WTC11 (cell line): ENCODE measurements at regions of chr9 and their contacts with region 1.

Region 1: GRCh38 chr9:35675732-35676392 is 2.1 kb downstream of the CA9 start:
- DNase-seq: peak; percentile 95
- ATAC-seq: peak; percentile 92
- H3K4me3 Mint-ChIP-seq: peak overlapping the region; percentile 69
- H3K27ac Mint-ChIP-seq: no peak overlapping the region
- H3K4me1 Mint-ChIP-seq: peaks cover 15% of the 10 kb centered on the region
- H3K27me3 Mint-ChIP-seq: peaks cover 30% of the 10 kb centered on the region
- CTCF ChIP-seq: no peak

Region 2: DNA sequence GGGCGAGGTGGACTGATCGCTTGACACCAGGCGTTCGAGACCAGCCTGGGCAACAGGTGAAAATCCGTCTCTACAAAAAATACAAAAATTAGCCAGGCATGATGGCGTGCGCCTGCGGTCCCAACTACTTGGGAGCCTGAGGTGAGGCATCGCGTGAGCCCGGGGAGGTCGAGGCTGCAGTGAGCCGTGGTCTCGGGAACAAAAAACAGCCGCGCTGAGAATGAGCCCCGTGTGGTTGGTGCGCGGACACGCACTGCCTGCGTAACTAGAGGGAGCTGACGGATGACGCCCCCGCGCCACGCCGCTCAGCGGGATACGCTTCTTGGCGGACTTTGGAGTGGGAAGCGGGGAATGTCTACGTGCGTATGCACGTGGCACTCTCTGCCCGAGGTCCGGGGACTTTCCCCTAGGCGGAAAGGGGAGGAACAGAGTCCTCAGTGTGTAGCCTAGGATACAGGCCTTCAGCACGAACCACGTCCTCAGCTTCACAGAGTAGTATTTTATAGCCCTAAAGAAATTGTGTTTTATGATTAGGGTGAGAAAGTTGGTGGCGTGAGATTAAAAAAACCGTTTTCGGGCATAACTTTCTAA is 18.2 kb before region 1 on chr9 and contains the start of gene RMRP:
- CTCF ChIA-PET with region 1: interaction called, 32 read pairs
- POLR2A ChIA-PET with region 1: interaction called, 5 read pairs
- DNase-seq: peak; percentile 96
- ATAC-seq: peak; percentile 90
- H3K4me3 Mint-ChIP-seq: peak within 1 kb of the TSS; percentile 85
- H3K27ac Mint-ChIP-seq: peak within 1 kb of the TSS; percentile 100
- H3K4me1 Mint-ChIP-seq: peaks cover 20% of the 10 kb centered on the region
- H3K27me3 Mint-ChIP-seq: peaks cover 23% of the 10 kb centered on the region
- CTCF ChIP-seq: no peak
- total RNA-seq, gene RMRP: 23,577 to 25,958 TPM (median 25,042 TPM) in 3 replicates

Region 3: GRCh38 chr9:35711501-35712428 is 35.9 kb after region 1 on chr9:
- CTCF ChIA-PET with region 1: interaction called, 11 read pairs
- POLR2A ChIA-PET with region 1: no interaction called
- DNase-seq: no peak
- ATAC-seq: no peak
- H3K4me3 Mint-ChIP-seq: no peak overlapping the region
- H3K27ac Mint-ChIP-seq: no peak overlapping the region
- H3K4me1 Mint-ChIP-seq: no peaks in the 10 kb centered on the region
- H3K27me3 Mint-ChIP-seq: no peaks in the 10 kb centered on the region
- CTCF ChIP-seq: no peak